Left cardiac atrium (tissue), 4 donors: ENCODE measurements at regions of chr6 and their contacts with region 1.

Region 1: DNA sequence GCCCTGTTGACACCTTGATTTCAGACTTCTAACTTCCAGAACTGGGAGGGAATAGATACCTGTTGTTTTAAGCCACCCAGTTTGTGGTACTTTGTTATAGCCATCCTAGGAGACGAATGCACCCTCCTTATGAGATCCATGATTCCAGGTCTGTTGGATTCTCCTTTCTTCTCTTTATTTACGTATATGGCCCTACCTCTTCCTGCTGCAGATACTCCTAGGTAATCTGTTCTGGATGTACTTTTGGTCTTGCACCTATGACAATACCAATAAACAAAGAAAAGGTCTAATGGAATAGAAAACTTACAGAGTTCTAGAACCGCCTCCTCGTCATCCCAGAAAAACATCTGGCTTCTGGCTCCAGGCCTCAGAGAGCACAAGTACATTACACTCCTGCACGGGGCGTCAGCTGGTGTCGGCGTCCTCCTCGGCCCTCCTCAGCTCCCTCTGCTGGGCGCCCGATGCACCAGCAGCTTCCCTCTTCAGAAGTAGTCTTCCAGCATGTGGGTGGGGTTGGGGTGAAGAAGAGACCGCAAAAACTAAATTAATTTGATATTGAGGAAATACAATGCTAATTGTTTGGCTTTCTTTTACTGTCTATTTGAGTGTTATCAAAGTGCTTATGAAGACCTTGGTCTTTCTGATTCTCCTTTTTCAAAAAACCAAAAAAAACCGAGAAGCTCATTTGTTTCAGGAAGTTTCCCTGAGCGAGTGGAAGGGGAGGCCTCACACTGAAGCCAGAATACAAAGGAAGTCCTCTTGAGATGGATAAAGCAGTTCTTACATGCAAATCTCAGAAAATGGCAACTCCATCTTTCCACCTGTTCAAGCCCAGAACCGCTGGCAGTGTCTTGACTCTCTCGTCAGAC is 9.7 kb upstream of the ATXN1 start:
- DNase-seq: peak; percentile 80
- ATAC-seq: peak; percentile 82 to 85

Region 2: GRCh38 chr6:16964553-16965501 is 193.9 kb after region 1 on chr6:
- intact Hi-C with region 1: loop called (anchors 5 to 10 kb)
- DNase-seq: peak; percentile 70
- ATAC-seq: peak; percentile 90 to 92

Region 3: GRCh38 chr6:17086469-17086868 is 315.5 kb after region 1 on chr6:
- intact Hi-C with region 1: loop called in 1 of 2 experiments (anchors 2 kb)
- DNase-seq: peak; percentile 31
- ATAC-seq: peak; percentile 85 to 86